PC-3 (cell line): ENCODE measurements at regions of chr3 and their contacts with region 1.

Region 1: DNA sequence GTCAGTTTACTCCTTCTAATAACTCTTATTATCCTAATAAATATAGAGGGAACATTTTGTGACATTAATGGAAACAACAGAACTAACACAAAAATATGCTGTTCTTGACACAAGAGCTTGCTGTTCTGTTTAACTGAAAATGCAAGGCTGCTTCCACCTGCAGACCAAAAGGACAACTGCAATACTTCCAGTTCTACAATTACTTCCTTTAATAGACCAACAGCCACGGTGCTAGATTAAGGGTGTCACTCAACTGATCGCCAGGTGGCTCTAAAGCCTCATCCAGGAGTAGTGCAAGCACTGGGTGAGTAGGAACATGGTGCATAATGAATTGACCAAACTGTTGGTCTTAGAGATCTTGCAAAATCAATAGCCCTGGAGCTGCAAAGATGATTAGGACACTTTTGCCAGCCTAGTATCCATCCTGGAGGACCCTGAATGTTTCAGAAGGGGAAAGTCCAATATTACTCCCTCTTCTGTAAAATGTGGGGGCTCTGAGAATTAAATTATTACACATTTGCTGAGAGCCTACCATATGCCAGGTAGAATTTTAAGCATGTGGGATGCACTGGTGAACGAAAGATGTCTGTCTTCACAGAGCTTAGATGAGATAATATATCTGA is 3.6 kb upstream of the CLDN16 start:
- DNase-seq: peak; percentile 86
- ATAC-seq: peak; percentile 48
- H3K4me3 ChIP-seq: no peak overlapping the region
- H3K27ac ChIP-seq: peak overlapping the region; percentile 96
- H3K4me1 ChIP-seq: peaks cover 67% of the 10 kb centered on the region
- H3K27me3 ChIP-seq: no peaks in the 10 kb centered on the region
- CTCF ChIP-seq: peak; percentile 92

Region 2: GRCh38 chr3:189961525-189962161 is 422.7 kb before region 1 on chr3:
- CTCF ChIA-PET with region 1: no interaction called
- POLR2A ChIA-PET with region 1: interaction called, 7 read pairs
- intact Hi-C with region 1: loop called (anchors 10 kb)
- DNase-seq: peak; percentile 95
- ATAC-seq: peak; percentile 82
- H3K4me3 ChIP-seq: no peak overlapping the region
- H3K27ac ChIP-seq: no peak overlapping the region
- H3K4me1 ChIP-seq: peaks cover 4% of the 10 kb centered on the region; the same call in 1 of the 2 replicates
- H3K27me3 ChIP-seq: no peaks in the 10 kb centered on the region
- CTCF ChIP-seq: peak; percentile 95

Region 3: DNA sequence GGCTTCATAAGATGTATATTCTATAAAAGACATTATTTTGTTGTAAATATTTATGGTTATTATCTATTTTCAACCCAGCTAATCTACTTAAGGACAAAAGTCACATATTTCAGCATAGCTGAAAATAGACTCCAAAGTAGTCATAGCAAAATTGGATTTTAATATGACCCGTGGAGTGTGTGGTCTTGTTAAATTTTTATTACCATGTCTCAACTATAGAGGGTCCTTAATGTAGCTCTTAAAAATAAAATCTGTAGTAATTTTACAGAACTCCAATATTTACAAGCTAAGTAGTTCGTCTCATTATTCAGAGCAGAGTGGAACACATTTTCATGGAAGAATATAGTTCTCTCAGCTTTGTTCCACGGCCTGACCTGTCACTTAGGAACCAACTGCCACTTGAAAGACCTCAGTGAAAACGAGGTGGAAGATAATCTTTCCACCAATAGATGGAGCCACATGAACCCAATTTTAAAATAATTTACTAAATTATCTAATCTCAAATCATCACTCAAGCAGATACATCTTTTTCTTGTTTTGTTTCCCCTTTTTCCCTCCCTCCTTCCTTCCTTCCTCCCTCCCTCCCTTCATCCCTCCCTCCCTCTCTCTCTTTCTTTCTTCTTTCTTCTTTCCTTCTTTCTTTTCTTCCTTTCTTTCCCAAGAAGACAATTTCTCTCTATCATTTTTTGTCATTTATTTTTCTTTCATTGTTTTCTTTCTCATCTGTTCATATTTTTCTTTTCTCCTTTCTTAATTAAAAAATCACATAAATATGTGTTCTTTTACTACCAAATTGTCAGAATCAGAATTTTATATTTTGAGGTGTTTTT is 159.3 kb before region 1 on chr3:
- CTCF ChIA-PET with region 1: interaction called, 9 read pairs
- POLR2A ChIA-PET with region 1: no interaction called
- intact Hi-C with region 1: loop called (anchors 1 kb)
- DNase-seq: peak; percentile 78
- ATAC-seq: peak; percentile 73
- H3K4me3 ChIP-seq: no peak overlapping the region
- H3K27ac ChIP-seq: no peak overlapping the region
- H3K4me1 ChIP-seq: peaks cover 11% of the 10 kb centered on the region
- H3K27me3 ChIP-seq: no peaks in the 10 kb centered on the region
- CTCF ChIP-seq: peak; percentile 72

Region 4: DNA sequence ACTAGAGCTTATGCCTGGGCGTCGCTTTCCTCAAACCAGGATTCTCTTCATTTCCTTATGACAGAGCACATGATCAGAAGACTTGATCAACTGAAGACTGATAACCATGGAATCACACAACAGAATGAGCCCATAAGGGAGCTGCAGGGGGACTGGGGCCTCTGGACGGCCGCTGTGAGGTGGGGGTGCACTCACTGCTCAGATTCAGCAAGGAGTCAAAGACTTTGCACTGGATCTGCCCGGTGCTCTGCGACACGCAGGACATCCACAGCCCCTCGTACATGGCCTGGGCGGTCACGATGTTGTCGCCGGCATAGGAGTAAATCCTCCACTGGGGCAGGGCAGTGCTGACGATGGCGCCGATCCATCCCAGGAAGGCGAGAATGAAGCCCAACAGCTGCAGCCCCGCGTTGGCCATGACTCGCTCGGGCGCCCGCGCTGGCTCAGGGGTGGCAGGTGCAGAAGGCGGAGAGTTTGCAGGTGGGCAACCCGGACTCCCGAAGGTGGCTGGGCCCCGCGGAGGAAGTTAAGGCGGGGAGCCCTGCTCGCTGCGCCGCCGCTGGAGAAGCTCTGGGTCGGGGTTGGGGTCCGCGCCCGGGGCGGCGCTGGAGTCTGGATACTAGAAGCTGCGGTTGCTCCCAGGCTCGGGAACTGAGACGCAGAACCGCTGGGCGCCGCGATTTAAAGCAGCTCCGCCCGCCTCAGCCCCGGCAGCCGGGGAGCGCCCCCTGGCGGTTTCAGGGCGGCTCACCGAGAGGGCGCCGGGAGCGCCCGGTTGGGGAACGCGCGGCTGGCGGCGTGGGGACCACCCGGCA is 62.4 kb before region 1 on chr3 and contains the start of gene CLDN1:
- CTCF ChIA-PET with region 1: interaction called, 18 read pairs
- POLR2A ChIA-PET with region 1: no interaction called
- intact Hi-C with region 1: loop called (anchors 1 kb)
- DNase-seq: peak; percentile 80
- ATAC-seq: peak; percentile 92
- H3K4me3 ChIP-seq: peak within 1 kb of the TSS; percentile 69
- H3K27ac ChIP-seq: no peak within 1 kb of the TSS
- H3K4me1 ChIP-seq: peaks cover 20% of the 10 kb centered on the region
- H3K27me3 ChIP-seq: no peaks in the 10 kb centered on the region
- CTCF ChIP-seq: peak; percentile 92
- total RNA-seq, gene CLDN1: 6.8 and 9.6 TPM in 2 replicates

Region 5: DNA sequence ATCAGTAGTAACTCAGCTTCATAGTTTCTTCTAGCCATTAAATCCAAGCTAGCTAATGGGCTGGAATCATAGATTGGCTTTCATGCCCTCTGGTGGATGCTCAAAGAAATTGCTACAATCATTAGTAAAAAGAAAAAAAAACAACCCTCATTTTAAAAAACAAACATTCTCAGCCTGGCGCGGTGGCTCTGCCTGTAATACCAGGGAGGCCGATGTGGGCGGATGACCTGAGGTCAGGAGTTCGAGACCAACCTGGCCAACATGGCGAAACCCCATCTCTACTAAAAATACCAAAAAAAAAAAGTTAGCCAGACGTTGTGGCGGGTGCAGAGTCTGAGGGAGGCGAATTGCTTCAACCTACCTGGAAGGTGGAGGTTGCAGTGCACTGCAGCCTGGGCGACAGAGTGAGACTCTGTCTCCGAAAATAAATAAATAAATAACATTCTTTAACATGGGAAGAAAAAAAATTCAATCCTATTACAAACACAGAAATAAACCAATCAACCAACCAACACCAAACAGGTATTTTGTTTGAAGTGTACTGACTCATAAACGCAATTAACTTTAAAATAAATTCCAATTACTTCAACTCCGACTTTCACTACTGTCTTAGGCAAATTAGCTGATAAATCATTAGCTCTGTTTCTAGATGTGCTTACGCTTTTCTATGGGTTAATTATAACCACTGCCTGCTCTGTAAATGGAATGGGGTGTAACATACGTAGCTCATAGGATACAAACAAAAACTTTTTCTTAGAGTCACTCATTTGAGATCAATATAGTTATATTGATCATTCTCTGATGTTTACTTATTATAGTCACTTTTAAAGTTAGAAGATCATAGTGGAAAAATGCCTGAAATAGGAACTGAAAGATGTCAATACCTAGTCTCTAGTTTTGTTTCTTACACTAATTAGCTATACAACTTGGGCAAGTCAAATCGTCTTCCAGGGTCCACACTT is 40.4 kb after region 1 on chr3:
- CTCF ChIA-PET with region 1: interaction called, 15 read pairs
- POLR2A ChIA-PET with region 1: interaction called, 4 read pairs
- intact Hi-C with region 1: loop called (anchors 1 kb)
- DNase-seq: peak; percentile 78
- ATAC-seq: peak; percentile 82
- H3K4me3 ChIP-seq: no peak overlapping the region
- H3K27ac ChIP-seq: no peak overlapping the region
- H3K4me1 ChIP-seq: no peaks in the 10 kb centered on the region
- H3K27me3 ChIP-seq: no peaks in the 10 kb centered on the region
- CTCF ChIP-seq: peak; percentile 81

Region 6: DNA sequence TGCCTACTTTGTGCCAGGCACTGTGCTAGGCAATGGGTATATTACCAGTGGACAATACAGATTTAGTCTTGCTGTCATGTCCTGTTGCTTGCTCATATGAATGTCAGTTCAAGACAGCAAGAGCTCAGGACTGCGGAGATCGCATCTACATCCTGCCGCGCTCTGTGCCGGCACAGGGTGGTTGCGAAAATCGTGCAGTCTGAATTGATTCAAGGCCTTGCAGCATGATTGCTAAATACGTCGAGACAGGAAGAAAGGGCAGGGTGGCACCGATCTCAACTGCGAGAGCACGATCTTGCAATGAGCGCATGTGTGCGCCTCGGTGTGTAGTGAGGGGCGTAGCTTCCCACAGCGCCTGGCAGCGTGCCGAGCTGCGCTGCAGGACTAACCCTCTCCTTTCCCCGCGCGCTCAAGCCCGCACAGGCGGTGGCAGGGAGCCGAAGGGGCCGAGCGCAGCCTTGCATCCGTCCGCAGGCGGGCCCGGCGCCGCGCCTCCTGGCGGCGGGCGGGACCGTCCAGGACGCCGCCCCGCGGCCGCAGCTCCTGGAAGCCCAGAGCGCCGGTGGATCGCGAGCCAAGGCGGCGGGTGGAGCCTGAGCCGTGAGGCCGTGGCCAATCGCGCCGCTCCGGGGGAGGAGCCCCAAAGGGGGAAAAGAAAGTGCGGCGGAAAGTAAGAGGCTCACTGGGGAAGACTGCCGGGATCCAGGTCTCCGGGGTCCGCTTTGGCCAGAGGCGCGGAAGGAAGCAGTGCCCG is 129.2 kb after region 1 on chr3 and contains the start of gene IL1RAP:
- CTCF ChIA-PET with region 1: interaction called, 4 read pairs
- POLR2A ChIA-PET with region 1: no interaction called
- intact Hi-C with region 1: loop called (anchors 2 kb)
- DNase-seq: peak; percentile 96
- ATAC-seq: peak; percentile 91
- H3K4me3 ChIP-seq: peak within 1 kb of the TSS; percentile 95
- H3K27ac ChIP-seq: peak within 1 kb of the TSS; percentile 24
- H3K4me1 ChIP-seq: peaks cover 40% of the 10 kb centered on the region
- H3K27me3 ChIP-seq: no peaks in the 10 kb centered on the region
- CTCF ChIP-seq: peak; percentile 65
- total RNA-seq, gene IL1RAP: 5.0 and 13.4 TPM in 2 replicates

Region 7: GRCh38 chr3:191066669-191067068 is 682.3 kb after region 1 on chr3:
- CTCF ChIA-PET with region 1: no interaction called
- POLR2A ChIA-PET with region 1: no interaction called
- intact Hi-C with region 1: loop called (anchors 10 kb)
- DNase-seq: peak; percentile 92
- ATAC-seq: peak; percentile 67
- H3K4me3 ChIP-seq: peak overlapping the region; percentile 25; the same call in 1 of the 2 replicates
- H3K27ac ChIP-seq: peak overlapping the region; percentile 95
- H3K4me1 ChIP-seq: peaks cover 69% of the 10 kb centered on the region
- H3K27me3 ChIP-seq: no peaks in the 10 kb centered on the region
- CTCF ChIP-seq: no peak